Psoas muscle (tissue), 8 donors: ENCODE measurements at regions of chr21 and their contacts with region 1.

Region 1: GRCh38 chr21:38355992-38356797 is 99.4 kb downstream of the KCNJ15 start:
- DNase-seq: peak; percentile 77 to 82
- ATAC-seq: peak; percentile 70 to 81 (median 74)
- H3K4me3 ChIP-seq: no peak overlapping the region
- H3K27ac ChIP-seq: no peak overlapping the region
- H3K4me1 ChIP-seq: no peaks in the 10 kb centered on the region
- H3K27me3 ChIP-seq: peaks cover 0 to 4% (median 0%) of the 10 kb centered on the region in 3 donors
- CTCF ChIP-seq: peak; percentile 82

Region 2: DNA sequence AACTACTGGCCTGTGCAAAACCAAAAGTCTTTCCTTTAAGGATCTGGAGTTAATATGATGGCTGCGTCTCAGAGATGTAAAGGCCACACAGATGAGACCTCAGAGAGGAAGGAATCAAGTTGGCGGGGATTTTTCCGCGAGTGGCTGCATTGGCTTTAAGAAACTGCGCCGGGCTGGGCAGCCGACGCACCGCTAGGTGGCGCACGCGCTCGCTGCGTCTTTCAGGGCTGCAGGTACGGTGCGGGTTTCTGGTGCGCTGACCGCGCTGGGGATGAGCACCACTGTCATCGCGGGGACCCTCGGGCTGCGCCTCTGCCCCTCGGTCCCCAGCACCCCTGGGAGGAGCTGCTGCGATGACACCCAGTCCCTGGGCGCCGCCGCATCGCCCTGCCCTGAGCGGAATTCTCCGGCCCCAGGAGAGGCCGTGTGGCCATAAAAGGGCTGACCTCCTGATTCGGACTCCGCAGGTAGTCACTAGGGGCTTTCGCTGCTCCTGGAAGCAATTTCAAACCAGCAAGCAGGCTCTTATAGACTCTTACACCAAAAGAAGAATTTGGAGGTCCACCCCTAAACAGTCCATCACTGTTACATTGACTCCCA is 680.9 kb before region 1 on chr21:
- intact Hi-C with region 1: loop called (anchors 10 kb)
- DNase-seq: peak; percentile 62 to 77
- ATAC-seq: peak; percentile 62 to 88 (median 74)
- H3K4me3 ChIP-seq: peak overlapping the region; percentile 48
- H3K27ac ChIP-seq: no peak overlapping the region
- H3K4me1 ChIP-seq: no peaks in the 10 kb centered on the region
- H3K27me3 ChIP-seq: peaks cover 0 to 6% (median 3%) of the 10 kb centered on the region in 3 donors
- CTCF ChIP-seq: peak; percentile 97

Region 3: DNA sequence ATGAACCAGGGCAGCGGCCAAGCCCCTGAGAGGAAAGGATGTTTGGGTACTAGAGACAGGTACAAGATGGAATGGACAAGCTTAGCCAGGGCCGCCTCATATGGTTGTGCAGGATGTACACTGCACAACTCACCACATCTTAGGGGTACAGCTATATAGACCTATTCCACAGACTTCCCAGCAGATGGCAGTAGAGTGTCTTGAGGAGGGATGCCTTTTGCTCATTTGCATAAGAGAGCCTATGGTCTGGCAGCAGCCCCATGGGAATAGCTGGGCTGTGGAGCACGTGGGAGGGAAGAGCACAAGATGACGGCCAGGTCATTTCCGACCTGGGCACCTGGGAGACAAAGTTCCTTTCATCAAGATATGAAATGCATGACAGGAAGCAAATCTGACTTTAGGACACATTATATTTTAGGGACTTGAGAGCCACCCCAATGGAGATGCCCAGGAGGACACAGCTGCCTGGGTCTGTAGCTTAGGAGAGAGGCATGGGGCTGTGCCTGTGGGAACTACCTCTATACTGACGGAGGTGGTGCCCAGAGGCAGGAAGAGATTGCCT is 655.5 kb before region 1 on chr21:
- intact Hi-C with region 1: loop called in 1 of 2 experiments (anchors 5 kb)
- DNase-seq: no peak
- ATAC-seq: peak; percentile 21 to 81 (median 72)
- H3K4me3 ChIP-seq: no peak overlapping the region
- H3K27ac ChIP-seq: no peak overlapping the region
- H3K4me1 ChIP-seq: no peaks in the 10 kb centered on the region
- H3K27me3 ChIP-seq: peaks cover 0 to 4% (median 2%) of the 10 kb centered on the region in 3 donors
- CTCF ChIP-seq: peak; percentile 53

Region 4: DNA sequence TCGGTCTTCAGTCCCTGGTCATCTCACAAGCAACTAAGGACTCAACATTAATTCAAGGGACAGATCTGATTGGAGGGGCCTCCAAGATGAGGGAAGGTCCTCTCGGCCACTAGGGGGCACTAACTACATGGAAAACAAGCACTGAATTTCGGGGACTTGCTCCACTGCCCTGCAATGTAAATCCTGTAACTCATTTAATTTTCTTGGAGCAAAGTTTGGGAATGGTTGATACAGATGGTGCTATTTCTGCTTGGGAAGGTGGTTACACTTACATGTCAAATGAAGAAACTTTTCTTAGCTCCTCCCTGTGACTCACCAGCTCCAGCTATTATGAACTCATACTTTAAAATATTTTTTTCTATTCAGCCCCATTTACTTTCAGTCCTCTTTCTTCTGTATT is 196.8 kb before region 1 on chr21:
- intact Hi-C with region 1: loop called in 1 of 2 experiments (anchors 1 kb)
- DNase-seq: peak in 1 of 2 donors; percentile 35
- ATAC-seq: no peak
- H3K4me3 ChIP-seq: no peak overlapping the region
- H3K27ac ChIP-seq: no peak overlapping the region
- H3K4me1 ChIP-seq: no peaks in the 10 kb centered on the region
- H3K27me3 ChIP-seq: peaks cover 0 to 15% (median 2%) of the 10 kb centered on the region in 3 donors
- CTCF ChIP-seq: peak; percentile 63

Region 5: DNA sequence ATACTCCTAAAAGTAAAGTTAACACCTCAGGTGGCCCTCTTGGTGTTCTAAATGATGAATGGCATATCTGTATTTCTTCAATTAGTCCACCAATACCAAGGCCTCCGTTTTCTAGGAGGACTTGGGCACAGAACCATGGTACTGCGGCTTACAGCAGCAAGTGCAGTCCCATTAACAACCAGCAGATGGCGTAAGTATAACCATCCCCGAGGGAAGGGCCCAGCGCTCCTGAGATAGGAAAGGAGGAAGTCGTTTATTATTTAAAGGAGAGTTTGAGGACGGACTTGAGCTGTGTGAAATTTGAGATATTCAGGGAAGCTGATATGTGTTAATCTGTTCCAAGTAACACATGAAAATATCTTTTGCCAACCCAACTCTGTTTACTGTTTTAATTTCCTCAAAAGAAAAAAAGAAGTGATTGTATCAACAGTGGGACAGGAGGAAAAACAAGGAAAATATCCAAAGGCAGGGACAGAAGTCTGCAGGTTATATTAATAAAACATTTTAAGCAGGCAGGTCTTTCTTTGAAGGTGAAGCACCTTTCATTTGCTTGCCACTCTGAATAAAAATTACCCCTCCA is 137.1 kb before region 1 on chr21:
- intact Hi-C with region 1: loop called (anchors 1 to 5 kb)
- DNase-seq: peak in 1 of 2 donors; percentile 38
- ATAC-seq: peak in 3 of 4 donors; percentile 54 to 69 (median 67)
- H3K4me3 ChIP-seq: no peak overlapping the region
- H3K27ac ChIP-seq: no peak overlapping the region
- H3K4me1 ChIP-seq: no peaks in the 10 kb centered on the region
- H3K27me3 ChIP-seq: peaks cover 0 to 2% (median 1%) of the 10 kb centered on the region in 3 donors
- CTCF ChIP-seq: peak; percentile 91

Region 6: GRCh38 chr21:38424305-38425019 is 68.3 kb after region 1 on chr21:
- intact Hi-C with region 1: no loop called
- DNase-seq: no peak
- ATAC-seq: no peak
- H3K4me3 ChIP-seq: no peak overlapping the region
- H3K27ac ChIP-seq: no peak overlapping the region
- H3K4me1 ChIP-seq: no peaks in the 10 kb centered on the region
- H3K27me3 ChIP-seq: no peaks in the 10 kb centered on the region
- CTCF ChIP-seq: no peak